B cell (primary cell): ENCODE measurements at regions of chr15 and their contacts with region 1.

Region 1: GRCh38 chr15:62742409-62743171 is 300.0 kb upstream of the TPM1 start:
- DNase-seq: peak; percentile 49
- ATAC-seq: no peak
- H3K4me3 ChIP-seq: no peak overlapping the region
- H3K4me3 Mint-ChIP-seq: no peak overlapping the region
- H3K27ac ChIP-seq: no peak overlapping the region
- H3K27ac Mint-ChIP-seq: no peak overlapping the region
- H3K4me1 ChIP-seq: no peaks in the 10 kb centered on the region
- H3K4me1 Mint-ChIP-seq: no peaks in the 10 kb centered on the region
- H3K27me3 ChIP-seq: no peaks in the 10 kb centered on the region
- H3K27me3 Mint-ChIP-seq: no peaks in the 10 kb centered on the region
- CTCF ChIP-seq: peak; percentile 86

Region 2: DNA sequence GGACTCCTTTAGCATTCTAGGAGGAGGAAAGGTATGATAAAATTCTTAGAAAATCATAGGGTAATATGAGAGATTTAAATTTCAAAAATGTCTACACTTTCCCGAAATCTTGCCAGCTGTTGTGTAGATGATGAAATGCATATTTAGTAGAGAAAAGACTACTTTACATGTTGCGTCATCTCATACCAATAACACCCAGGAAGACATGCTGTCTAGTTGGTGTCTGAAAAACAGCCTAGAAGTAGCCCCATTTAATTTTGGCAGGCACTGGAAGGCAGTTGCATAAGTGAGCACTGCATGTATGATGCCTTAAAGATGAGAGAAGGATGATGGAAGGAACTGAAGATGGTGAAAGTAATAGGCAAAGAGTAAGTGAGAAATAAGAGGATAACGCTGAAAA is 10.5 kb before region 1 on chr15:
- CTCF ChIA-PET with region 1: interaction called, 42 read pairs
- POLR2A ChIA-PET with region 1: no interaction called
- intact Hi-C with region 1: no loop called
- DNase-seq: no peak
- ATAC-seq: no peak
- H3K4me3 ChIP-seq: no peak overlapping the region
- H3K4me3 Mint-ChIP-seq: no peak overlapping the region
- H3K27ac ChIP-seq: no peak overlapping the region
- H3K27ac Mint-ChIP-seq: no peak overlapping the region
- H3K4me1 ChIP-seq: no peaks in the 10 kb centered on the region
- H3K4me1 Mint-ChIP-seq: no peaks in the 10 kb centered on the region
- H3K27me3 ChIP-seq: peaks cover 0 to 4% (median 0%) of the 10 kb centered on the region in 4 experiments
- H3K27me3 Mint-ChIP-seq: peaks cover 15% of the 10 kb centered on the region
- CTCF ChIP-seq: no peak